K562 (cell line): ENCODE measurements at regions of chr11 and their contacts with region 1.

Region 1: GRCh38 chr11:65329944-65330403 is 3.7 kb upstream of the DPF2 start:
- DNase-seq: peak; percentile 52 to 96 (median 64)
- ATAC-seq: peak; percentile 65
- H3K4me3 ChIP-seq: no peak overlapping the region
- H3K27ac ChIP-seq: no peak overlapping the region; the same call in 1 of the 3 replicates
- H3K4me1 ChIP-seq: peaks cover 10 to 11% of the 10 kb centered on the region in 2 experiments; a peak in 4 of 5 replicates
- H3K27me3 ChIP-seq: no peaks in the 10 kb centered on the region
- CTCF ChIP-seq: peak; percentile 78 to 82 (median 80)
- EP300 ChIP-seq: no peak
- POLR2A ChIP-seq: no peak
- RAD21 ChIP-seq: peak; percentile 55 to 74

Region 2: DNA sequence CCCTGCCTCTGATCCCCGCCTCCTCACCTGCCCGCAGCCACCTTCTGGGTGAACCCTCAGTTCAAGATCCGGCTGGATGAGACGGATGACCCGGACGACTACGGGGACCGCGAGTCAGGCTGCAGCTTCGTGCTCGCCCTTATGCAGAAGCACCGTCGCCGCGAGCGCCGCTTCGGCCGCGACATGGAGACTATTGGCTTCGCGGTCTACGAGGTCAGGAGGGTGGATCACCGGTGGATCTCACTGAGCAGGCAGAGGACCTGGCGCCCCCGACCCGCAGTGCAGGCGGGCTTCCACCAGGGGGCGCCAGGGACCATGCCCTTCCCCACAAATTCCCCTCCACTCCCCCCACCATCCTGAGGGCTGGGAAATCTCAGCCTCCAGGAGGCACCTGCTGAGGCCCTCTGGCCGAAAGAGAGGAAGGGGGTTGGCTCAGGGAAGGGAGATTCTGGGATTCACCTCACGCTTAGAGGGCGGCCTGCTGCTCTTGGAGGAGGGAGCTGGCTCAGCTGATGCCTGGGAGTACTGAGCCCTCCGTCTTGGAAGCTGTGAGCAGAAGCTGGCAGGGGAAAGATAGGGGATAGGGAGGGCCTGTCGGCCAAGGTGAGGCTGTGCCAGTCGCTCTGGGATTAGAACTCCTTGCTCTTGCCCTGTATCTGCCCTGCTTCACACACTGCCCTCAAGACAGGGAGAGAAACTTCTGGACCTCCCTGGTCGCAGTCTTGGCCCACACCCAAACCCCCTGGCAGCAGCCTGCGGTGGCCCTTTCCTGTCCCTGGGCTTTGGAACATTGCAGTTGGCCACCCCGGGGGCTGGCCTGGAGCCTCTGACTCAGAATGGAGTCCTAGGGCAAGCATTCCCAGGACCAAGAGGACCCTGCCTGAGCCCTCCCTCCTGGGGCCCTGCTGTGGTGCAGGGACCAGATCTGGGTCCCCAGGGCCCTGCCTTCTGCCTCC is 125.0 kb before region 1 on chr11:
- CTCF ChIA-PET with region 1: interaction called, 6 read pairs
- POLR2A ChIA-PET with region 1: no interaction called
- in situ Hi-C with region 1: no loop called
- intact Hi-C with region 1: loop called (anchors 2 kb)
- DNase-seq: peak; percentile 68 to 91 (median 86)
- ATAC-seq: peak; percentile 95
- H3K4me3 ChIP-seq: no peak overlapping the region
- H3K27ac ChIP-seq: no peak overlapping the region
- H3K4me1 ChIP-seq: peaks cover 0 to 18% of the 10 kb centered on the region in 2 experiments; a peak in 2 of 5 replicates
- H3K27me3 ChIP-seq: no peaks in the 10 kb centered on the region
- CTCF ChIP-seq: peak; percentile 90 to 94 (median 91)
- EP300 ChIP-seq: no peak
- POLR2A ChIP-seq: no peak
- RAD21 ChIP-seq: peak; percentile 58 to 77

Region 3: GRCh38 chr11:65274735-65275682 is 55.0 kb before region 1 on chr11:
- CTCF ChIA-PET with region 1: interaction called, 26 read pairs
- POLR2A ChIA-PET with region 1: interaction called, 14 read pairs
- in situ Hi-C with region 1: no loop called
- intact Hi-C with region 1: loop called (anchors 1 kb)
- DNase-seq: peak; percentile 72 to 92 (median 77)
- ATAC-seq: peak; percentile 97
- H3K4me3 ChIP-seq: no peak overlapping the region
- H3K27ac ChIP-seq: peak overlapping the region; percentile 71
- H3K4me1 ChIP-seq: peaks cover 0 to 9% of the 10 kb centered on the region in 2 experiments; a peak in 3 of 5 replicates
- H3K27me3 ChIP-seq: no peaks in the 10 kb centered on the region
- CTCF ChIP-seq: peak; percentile 86 to 97 (median 88)
- EP300 ChIP-seq: peak; percentile 73
- POLR2A ChIP-seq: no peak
- RAD21 ChIP-seq: peak; percentile 94 to 95

Region 4: DNA sequence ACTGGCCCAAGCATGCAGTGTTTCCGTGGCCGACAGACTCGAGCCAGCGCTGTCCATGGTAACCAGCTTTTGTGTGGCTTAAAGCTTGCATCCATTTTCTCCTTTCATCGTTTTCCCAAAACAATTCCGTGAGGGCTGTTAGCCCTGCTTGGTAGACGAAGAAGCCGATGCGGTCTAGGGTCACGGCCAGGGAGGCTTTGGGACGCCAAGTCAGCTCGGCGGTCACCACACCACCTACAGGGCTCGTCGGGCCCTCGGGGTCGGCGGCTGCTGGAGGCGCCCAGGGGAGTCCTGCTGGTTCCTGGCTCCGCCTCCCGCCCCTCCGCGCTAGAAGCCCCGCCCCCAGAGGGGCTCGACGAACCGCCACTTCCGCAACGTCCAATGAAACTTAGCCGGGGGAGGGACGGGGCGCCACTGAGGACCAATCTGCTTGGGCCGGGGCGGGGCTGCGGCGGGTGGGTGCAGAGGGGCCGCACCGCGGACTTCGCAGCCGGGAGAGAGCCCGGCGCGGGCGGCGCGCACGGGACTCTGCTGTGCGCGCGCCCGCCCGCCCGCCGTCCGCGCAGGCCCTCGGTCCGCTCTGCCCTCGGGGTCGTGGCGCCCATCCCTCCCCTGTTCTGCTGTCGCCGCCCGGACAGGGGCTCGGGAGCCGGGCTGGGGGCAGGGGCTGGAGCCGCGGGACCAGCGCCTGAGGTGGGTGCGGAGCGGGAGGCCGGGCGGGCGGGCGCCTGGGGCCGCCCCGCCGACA is 24.5 kb after region 1 on chr11 and contains the start of gene TIGD3:
- CTCF ChIA-PET with region 1: no interaction called
- POLR2A ChIA-PET with region 1: interaction called, 13 read pairs
- in situ Hi-C with region 1: no loop called
- intact Hi-C with region 1: no loop called
- DNase-seq: peak; percentile 98 to 99 (median 99)
- ATAC-seq: peak; percentile 95
- H3K4me3 ChIP-seq: peak within 1 kb of the TSS; percentile 63
- H3K27ac ChIP-seq: peak within 1 kb of the TSS; percentile 66
- H3K4me1 ChIP-seq: peaks cover 25 to 48% of the 10 kb centered on the region in 2 experiments
- H3K27me3 ChIP-seq: no peaks in the 10 kb centered on the region
- CTCF ChIP-seq: 0 out of 6 replicates have a peak, but pooled peaks of 1 of the 3 experiments have one; percentile 2
- EP300 ChIP-seq: no peak
- POLR2A ChIP-seq: peak; percentile 42; the same call in 1 of the 2 replicates
- RAD21 ChIP-seq: no peak
- polyA plus RNA-seq, gene TIGD3: 0.06 to 0.08 TPM

Region 5: DNA sequence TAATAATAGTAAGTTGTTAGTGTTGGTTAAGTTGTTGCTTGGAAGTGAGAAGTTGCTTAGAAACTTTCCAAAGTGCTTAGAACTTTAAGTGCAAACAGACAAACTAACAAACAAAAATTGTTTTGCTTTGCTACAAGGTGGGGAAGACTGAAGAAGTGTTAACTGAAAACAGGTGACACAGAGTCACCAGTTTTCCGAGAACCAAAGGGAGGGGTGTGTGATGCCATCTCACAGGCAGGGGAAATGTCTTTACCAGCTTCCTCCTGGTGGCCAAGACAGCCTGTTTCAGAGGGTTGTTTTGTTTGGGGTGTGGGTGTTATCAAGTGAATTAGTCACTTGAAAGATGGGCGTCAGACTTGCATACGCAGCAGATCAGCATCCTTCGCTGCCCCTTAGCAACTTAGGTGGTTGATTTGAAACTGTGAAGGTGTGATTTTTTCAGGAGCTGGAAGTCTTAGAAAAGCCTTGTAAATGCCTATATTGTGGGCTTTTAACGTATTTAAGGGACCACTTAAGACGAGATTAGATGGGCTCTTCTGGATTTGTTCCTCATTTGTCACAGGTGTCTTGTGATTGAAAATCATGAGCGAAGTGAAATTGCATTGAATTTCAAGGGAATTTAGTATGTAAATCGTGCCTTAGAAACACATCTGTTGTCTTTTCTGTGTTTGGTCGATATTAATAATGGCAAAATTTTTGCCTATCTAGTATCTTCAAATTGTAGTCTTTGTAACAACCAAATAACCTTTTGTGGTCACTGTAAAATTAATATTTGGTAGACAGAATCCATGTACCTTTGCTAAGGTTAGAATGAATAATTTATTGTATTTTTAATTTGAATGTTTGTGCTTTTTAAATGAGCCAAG is 95.4 kb after region 1 on chr11:
- CTCF ChIA-PET with region 1: no interaction called
- POLR2A ChIA-PET with region 1: interaction called, 37 read pairs
- in situ Hi-C with region 1: no loop called
- intact Hi-C with region 1: no loop called
- DNase-seq: peak in 2 of 4 experiments; percentile 29 to 74
- ATAC-seq: no peak
- H3K4me3 ChIP-seq: peak overlapping the region; percentile 79
- H3K27ac ChIP-seq: peak overlapping the region; percentile 98
- H3K4me1 ChIP-seq: peaks cover 22 to 36% of the 10 kb centered on the region in 2 experiments
- H3K27me3 ChIP-seq: no peaks in the 10 kb centered on the region
- CTCF ChIP-seq: 0 out of 6 replicates have a peak, but pooled peaks of 1 of the 3 experiments have one; percentile 16
- EP300 ChIP-seq: no peak
- POLR2A ChIP-seq: peak; percentile 73
- RAD21 ChIP-seq: no peak; a peak in 1 of 4 replicates

Region 6: GRCh38 chr11:65625628-65626342 is 295.8 kb after region 1 on chr11:
- CTCF ChIA-PET with region 1: no interaction called
- POLR2A ChIA-PET with region 1: no interaction called
- in situ Hi-C with region 1: no loop called
- intact Hi-C with region 1: no loop called
- DNase-seq: peak in 3 of 4 experiments; percentile 32 to 46 (median 39)
- ATAC-seq: peak; percentile 81
- H3K4me3 ChIP-seq: no peak overlapping the region
- H3K27ac ChIP-seq: no peak overlapping the region
- H3K4me1 ChIP-seq: peaks cover 0 to 28% of the 10 kb centered on the region in 2 experiments; a peak in 1 of 5 replicates
- H3K27me3 ChIP-seq: no peaks in the 10 kb centered on the region
- CTCF ChIP-seq: peak; percentile 60 to 62 (median 61)
- EP300 ChIP-seq: no peak
- POLR2A ChIP-seq: no peak
- RAD21 ChIP-seq: peak; percentile 52 to 58